Activated naive CD4-positive, alpha-beta T cell treated with anti-CD3 and anti-CD28 coated beads for 36 hours (primary cell): ENCODE measurements at regions of chr16 and their contacts with region 1.

Region 1: DNA sequence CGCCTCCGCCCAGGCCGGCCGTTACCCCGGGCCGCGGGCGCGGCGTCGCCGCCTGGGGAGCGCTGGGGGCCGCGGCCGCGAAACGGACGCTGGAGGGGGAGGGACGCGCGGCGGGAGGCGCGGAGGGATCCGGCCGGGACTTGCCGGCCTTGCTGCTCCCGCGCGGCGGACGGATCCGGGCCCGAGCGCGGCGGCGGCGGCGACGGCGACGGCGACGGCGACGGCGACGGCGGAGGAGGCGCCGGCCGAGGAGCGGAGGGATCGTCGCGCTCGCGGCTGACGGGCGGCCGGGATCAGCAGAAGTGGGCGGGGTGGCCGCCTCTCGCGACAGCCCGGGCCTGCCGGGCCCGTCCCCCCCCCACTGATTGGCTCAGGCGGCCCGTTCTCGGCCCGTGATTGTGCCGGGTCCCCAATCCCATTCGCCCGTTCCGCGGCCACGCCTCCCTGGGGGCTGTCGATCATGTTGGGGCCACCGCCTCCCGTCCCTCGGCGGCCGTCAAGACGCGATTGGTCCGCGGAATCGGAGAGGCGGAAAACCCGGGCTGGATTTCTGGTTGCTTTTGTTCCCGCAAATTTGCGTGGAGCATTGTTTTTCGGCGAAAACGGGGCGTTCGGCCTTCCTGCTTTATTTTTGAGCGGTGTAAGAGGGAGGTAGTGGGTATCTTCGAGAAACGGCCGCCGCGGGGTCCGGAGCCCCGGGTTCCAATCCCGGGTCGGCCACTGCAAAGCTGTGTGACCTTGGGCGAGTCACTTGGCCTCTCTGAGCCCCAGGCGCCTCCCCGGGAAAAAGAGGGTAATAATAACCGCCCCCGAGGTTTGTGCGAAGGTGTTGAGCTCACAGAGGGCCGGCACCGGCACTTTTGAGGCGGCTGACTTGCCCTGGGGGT is at the start of gene ZCCHC14:
- DNase-seq: peak; percentile 100
- H3K4me3 Mint-ChIP-seq: peak within 1 kb of the TSS; percentile 76
- H3K27ac Mint-ChIP-seq: peak within 1 kb of the TSS; percentile 78
- H3K4me1 Mint-ChIP-seq: peaks cover 48% of the 10 kb centered on the region
- H3K27me3 Mint-ChIP-seq: no peaks in the 10 kb centered on the region
- total RNA-seq, gene ZCCHC14: 12.4 to 13.9 TPM

Region 2: GRCh38 chr16:86554917-86555703 is 937.9 kb before region 1 on chr16 and contains the start of gene MTHFSD:
- CTCF ChIA-PET with region 1: no interaction called
- intact Hi-C with region 1: loop called (anchors 10 kb)
- DNase-seq: peak; percentile 95
- H3K4me3 Mint-ChIP-seq: peak within 1 kb of the TSS; percentile 92
- H3K27ac Mint-ChIP-seq: peak within 1 kb of the TSS; percentile 88
- H3K4me1 Mint-ChIP-seq: peaks cover 11% of the 10 kb centered on the region
- H3K27me3 Mint-ChIP-seq: peaks cover 5% of the 10 kb centered on the region
- total RNA-seq, gene MTHFSD: 21.9 to 24.1 TPM

Region 3: GRCh38 chr16:87435372-87436224 is 57.4 kb before region 1 on chr16:
- CTCF ChIA-PET with region 1: no interaction called
- intact Hi-C with region 1: loop called (anchors 1 kb)
- DNase-seq: peak; percentile 29
- H3K4me3 Mint-ChIP-seq: peak overlapping the region; percentile 54
- H3K27ac Mint-ChIP-seq: peak overlapping the region; percentile 86
- H3K4me1 Mint-ChIP-seq: peaks cover 32% of the 10 kb centered on the region
- H3K27me3 Mint-ChIP-seq: no peaks in the 10 kb centered on the region

Region 4: DNA sequence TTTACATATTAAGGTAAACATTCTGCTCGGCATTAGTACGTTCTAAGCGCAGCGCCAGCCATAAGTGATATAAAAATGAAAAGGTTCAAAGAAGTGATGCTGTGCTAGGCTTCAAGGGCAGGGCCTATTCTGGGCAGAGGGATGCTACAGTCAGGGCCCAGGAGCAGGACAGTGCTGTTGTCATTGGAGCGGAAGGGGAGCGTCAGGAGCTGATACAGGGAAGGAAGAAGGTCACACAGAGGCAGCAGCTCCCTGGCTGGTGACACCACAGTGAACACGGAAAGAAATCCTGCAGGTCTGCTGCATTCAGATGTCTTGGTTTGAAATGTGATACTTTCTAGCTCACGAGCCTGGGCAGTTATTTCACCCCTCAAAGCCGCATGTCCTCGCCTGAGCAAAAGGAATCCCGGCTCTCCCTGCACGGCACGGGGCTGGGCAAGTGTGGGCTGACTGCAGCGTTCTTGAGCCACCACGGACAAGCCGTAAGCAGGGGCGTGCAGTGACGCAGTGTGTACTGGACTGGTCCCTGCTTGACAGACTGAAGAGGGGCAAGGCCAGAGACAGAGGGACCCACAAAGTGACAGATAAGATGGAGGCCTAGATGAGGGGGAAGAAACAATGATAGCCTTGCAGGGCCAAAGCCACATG is 41.3 kb before region 1 on chr16:
- CTCF ChIA-PET with region 1: no interaction called
- intact Hi-C with region 1: no loop called
- DNase-seq: no peak
- H3K4me3 Mint-ChIP-seq: no peak overlapping the region
- H3K27ac Mint-ChIP-seq: peak overlapping the region; percentile 8
- H3K4me1 Mint-ChIP-seq: no peaks in the 10 kb centered on the region
- H3K27me3 Mint-ChIP-seq: no peaks in the 10 kb centered on the region

Region 5: DNA sequence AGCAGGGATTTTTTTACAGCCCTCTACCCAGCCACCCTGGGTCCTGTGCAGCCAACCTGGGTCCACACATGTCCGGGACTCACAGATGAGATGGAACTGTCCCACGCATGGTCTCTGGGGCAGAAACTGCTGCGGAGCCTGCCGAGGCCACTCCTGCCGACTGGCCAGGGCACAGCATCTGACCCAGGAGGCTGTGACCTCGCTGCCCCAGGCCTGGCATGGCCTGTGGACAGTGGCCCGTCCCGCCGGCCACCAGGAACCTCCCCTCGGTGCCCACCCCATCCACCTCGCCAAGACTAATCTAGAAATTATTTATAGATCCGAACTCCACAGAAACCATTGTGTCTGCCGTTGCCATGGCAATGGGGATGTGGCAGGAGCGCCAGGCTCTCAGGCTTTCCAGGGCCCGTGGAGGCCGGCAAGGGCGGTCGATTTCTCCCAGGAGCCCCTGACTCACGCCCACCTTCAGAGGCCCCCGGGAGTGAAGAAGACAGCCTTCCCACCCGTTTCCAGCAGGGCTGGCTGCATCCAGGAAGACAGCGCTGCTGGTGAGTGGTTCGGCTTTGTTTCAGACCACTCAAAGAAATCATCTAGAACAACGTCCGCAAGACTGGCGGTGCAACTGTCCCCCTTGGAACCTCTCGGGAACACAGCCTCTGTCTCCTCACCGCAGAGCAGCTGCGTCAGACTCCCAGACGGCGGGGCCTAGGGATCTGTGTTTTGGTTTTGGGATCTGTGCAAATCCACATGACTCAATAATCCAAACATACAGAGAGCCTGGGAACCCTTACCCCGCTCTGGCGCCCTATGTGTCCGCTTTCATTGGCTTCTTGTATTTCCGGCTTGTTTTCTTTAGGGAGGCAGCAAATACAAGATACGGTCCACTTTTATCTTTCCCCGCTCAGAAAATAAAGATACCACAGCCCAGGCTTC is 48.2 kb after region 1 on chr16:
- CTCF ChIA-PET with region 1: interaction called, 4 read pairs
- intact Hi-C with region 1: loop called (anchors 1 kb)
- DNase-seq: no peak
- H3K4me3 Mint-ChIP-seq: no peak overlapping the region
- H3K27ac Mint-ChIP-seq: no peak overlapping the region
- H3K4me1 Mint-ChIP-seq: peaks cover 12% of the 10 kb centered on the region
- H3K27me3 Mint-ChIP-seq: peaks cover 18% of the 10 kb centered on the region

Region 6: GRCh38 chr16:87583453-87584131 is 90.6 kb after region 1 on chr16:
- CTCF ChIA-PET with region 1: no interaction called
- intact Hi-C with region 1: no loop called
- DNase-seq: no peak
- H3K4me3 Mint-ChIP-seq: no peak overlapping the region
- H3K27ac Mint-ChIP-seq: no peak overlapping the region
- H3K4me1 Mint-ChIP-seq: peaks cover under 1% of the 10 kb centered on the region
- H3K27me3 Mint-ChIP-seq: peaks cover 31% of the 10 kb centered on the region

Region 7: DNA sequence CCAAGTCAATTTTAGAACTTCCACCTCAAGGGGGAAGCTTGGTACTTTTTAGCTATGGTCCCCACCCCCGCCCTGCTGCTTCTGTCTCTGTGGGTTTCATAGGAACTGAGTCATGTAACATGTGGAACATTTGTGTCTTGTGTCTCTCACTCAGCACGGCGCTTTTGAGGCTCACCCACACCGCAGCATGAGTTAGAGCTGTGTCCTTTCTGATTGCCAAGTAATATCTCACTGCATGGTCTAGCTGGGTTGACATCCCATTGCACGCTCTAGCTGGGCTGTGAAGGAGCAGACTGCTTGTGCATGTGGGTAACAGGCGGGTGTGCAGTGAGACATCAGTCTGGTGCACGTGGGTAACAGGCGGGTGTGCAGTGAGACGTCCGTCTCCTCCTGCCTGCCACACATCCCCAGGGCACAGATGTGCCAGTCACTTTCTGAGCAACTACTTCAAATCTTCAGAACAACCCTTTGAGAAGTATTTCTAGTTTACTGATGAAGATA is 402.7 kb after region 1 on chr16:
- CTCF ChIA-PET with region 1: no interaction called
- intact Hi-C with region 1: loop called (anchors 5 kb)
- DNase-seq: peak; percentile 96
- H3K4me3 Mint-ChIP-seq: peak overlapping the region; percentile 38
- H3K27ac Mint-ChIP-seq: peak overlapping the region; percentile 98
- H3K4me1 Mint-ChIP-seq: peaks cover 54% of the 10 kb centered on the region
- H3K27me3 Mint-ChIP-seq: no peaks in the 10 kb centered on the region